ENCODE measurements at regions of chr19 and their contacts with region 1.

Region 1: GRCh38 chr19:18281082-18282020 is at the start of gene JUND:
- DNase-seq: peak; percentile 94
- H3K4me3 ChIP-seq: peak within 1 kb of the TSS; percentile 97
- H3K27ac ChIP-seq: peak within 1 kb of the TSS; percentile 99
- H3K27me3 ChIP-seq: no peaks in the 10 kb centered on the region
- CTCF ChIP-seq: no peak
- polyA plus RNA-seq, gene JUND: 48.6 and 67.8 TPM in 2 replicates

Region 2: DNA sequence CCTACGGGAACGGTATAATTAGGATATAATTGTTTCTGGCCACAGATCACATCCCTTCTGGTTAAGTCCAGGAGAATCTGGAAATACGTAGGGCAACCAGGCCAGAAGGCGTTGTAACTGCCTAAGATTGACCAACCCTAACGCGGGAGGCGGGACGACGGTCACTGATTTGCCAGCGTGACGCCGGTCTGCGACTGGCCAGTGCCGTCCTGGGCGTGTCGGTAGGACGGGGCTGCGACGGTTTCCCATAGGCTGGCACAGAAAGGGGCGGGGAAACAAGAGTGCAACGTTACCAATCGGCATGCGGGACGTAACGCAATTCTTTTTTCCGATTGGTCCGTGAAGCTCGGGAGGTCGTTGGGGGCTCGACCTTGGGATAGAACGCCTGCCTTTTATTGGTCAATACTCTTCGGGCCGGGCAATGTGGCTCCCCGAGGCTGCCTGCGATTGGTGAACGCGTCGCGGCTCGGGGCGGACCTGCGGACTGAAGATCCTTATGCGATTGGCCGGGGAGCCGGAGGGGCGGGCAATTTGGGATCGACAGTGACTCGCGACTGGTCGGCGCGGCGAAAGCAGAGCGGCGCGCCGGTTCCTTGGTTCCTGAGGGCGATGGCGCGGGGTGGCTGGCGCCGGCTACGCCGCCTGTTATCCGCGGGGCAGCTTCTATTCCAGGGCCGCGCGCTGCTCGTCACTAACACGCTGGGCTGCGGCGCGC is 88.5 kb before region 1 on chr19 and contains the start of gene MPV17L2:
- CTCF ChIA-PET with region 1: interaction called, 17 read pairs
- POLR2A ChIA-PET with region 1: interaction called, 21 read pairs
- DNase-seq: peak; percentile 100
- H3K4me3 ChIP-seq: peak within 1 kb of the TSS; percentile 84
- H3K27ac ChIP-seq: peak within 1 kb of the TSS; percentile 90
- H3K27me3 ChIP-seq: no peaks in the 10 kb centered on the region
- CTCF ChIP-seq: no peak
- polyA plus RNA-seq, gene MPV17L2: 8.2 and 13.4 TPM in 2 replicates

Region 3: DNA sequence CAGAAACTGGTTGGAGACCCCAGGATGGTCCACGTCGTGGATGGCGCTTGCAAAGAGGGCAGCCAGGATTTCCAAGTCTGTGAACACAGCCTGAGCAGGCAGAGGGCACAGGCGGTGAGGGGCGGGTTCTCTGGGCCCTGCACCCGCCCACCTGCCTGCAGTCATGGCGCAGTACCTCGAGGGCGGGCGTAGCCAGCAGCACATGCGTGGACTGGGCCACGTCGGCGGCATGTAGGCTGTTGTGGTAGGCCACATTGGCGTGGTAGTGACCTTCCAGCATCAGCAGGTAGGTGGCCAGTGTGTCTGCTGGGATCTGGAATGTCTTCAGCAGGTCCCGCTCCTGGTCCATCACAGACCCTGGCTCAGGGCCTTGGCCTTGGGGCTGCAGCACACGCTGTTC is 63.2 kb before region 1 on chr19:
- CTCF ChIA-PET with region 1: no interaction called
- POLR2A ChIA-PET with region 1: no interaction called
- DNase-seq: no peak
- H3K4me3 ChIP-seq: no peak overlapping the region
- H3K27ac ChIP-seq: no peak overlapping the region
- H3K27me3 ChIP-seq: no peaks in the 10 kb centered on the region
- CTCF ChIP-seq: no peak

Region 4: GRCh38 chr19:18251587-18252369 is 29.6 kb before region 1 on chr19:
- CTCF ChIA-PET with region 1: interaction called, 12 read pairs
- POLR2A ChIA-PET with region 1: interaction called, 3 read pairs
- DNase-seq: peak; percentile 20
- H3K4me3 ChIP-seq: no peak overlapping the region
- H3K27ac ChIP-seq: no peak overlapping the region
- H3K27me3 ChIP-seq: peaks cover 21% of the 10 kb centered on the region
- CTCF ChIP-seq: peak; percentile 92

Region 5: GRCh38 chr19:18297308-18297707 is 16.0 kb after region 1 on chr19:
- CTCF ChIA-PET with region 1: interaction called, 32 read pairs
- POLR2A ChIA-PET with region 1: interaction called, 130 read pairs
- DNase-seq: no peak
- H3K4me3 ChIP-seq: no peak overlapping the region
- H3K27ac ChIP-seq: no peak overlapping the region
- H3K27me3 ChIP-seq: no peaks in the 10 kb centered on the region
- CTCF ChIP-seq: no peak

Region 6: GRCh38 chr19:18328340-18329034 is 47.1 kb after region 1 on chr19:
- CTCF ChIA-PET with region 1: interaction called, 122 read pairs
- POLR2A ChIA-PET with region 1: interaction called, 109 read pairs
- DNase-seq: peak; percentile 95
- H3K4me3 ChIP-seq: peak overlapping the region; percentile 55
- H3K27ac ChIP-seq: peak overlapping the region; percentile 77
- H3K27me3 ChIP-seq: no peaks in the 10 kb centered on the region
- CTCF ChIP-seq: peak; percentile 96

Region 7: DNA sequence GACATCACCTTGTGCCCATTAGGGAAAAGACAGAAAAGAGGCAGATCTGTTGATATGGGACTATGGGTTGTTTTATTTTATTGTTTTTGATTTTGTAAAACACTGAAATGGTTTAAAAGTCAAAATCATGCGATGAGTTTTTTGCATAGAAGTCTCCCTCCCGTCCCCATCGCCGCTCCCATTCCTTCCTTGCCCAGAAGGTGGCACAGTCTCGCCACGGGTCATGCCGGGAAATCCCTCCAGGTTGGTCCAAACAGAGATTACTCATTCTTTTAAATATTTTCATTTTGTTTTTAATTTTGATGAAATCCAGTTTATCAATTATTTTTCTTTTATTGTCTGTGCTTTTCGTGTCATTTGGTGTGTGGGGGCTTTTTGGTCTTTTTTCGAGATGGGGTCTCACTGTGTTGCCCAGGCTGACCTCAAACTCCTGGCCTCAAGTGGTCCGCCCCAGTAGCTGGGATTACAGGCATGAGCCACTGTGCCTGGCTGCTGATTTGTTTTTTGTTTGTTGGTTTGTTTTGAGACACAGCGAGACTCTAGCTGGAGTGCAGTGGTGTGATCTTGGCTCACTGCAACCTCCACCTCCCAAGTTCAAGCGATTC is 68.3 kb after region 1 on chr19:
- CTCF ChIA-PET with region 1: interaction called, 13 read pairs
- POLR2A ChIA-PET with region 1: interaction called, 4 read pairs
- DNase-seq: no peak
- H3K4me3 ChIP-seq: no peak overlapping the region
- H3K27ac ChIP-seq: no peak overlapping the region
- H3K27me3 ChIP-seq: no peaks in the 10 kb centered on the region
- CTCF ChIP-seq: peak; percentile 86